ENCODE measurements at regions of chr17 and their contacts with region 1.

Region 1: DNA sequence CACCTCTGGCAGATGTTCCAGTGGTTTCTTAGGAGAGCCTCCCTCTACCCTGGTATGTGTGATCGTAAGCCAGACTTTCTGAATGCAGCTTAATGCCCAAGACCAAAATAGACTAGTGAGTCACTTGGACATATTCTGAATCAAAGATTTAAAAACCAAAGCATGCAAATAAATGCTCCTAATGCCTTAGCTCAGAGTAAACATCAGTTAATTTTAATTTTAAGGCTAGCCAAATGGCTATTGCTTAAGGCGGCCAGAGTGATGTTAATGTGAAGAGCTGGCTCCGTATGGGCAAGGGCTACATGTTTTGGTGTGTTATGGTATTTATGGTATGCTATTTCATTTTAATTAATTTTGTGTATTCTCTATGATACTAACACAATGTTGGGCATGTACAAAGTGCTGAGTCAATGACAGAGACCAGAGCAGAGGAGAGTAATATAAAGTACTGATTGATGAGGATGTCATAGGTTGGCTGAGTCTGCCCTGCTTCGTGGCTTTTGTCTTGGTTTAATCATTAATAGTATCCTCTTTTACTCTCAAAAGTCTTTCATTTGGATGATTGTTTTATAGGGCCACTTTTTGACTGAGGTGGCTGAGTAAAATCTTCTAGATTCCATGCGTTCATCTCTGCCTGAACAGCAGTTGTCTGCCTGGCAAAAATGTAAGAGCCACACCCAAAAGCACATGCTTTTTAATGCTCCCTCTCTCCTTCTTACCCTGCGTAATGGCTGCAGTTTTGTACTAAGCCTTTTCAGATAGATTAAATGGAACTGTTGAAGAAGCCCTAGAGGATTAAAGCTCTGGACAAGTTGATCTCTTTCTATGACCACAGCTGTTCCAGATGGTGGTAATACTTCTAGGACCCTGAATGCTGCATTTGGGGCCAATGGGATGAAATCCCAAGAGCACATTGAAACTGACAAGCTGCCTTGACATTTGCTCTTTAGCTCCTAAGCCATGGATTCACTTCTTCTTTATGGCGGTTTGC is 59.6 kb downstream of the MAP2K6 start:
- DNase-seq: no peak
- ATAC-seq: peak in 5 of 8 donors; percentile 41 to 79 (median 55)
- H3K4me3 ChIP-seq: no peak overlapping the region
- H3K27ac ChIP-seq: peak overlapping the region in 3 of 10 donors; percentile 1 to 25 (median 7)
- H3K4me1 ChIP-seq: peaks cover 0 to 11% (median 0%) of the 10 kb centered on the region in 9 donors
- H3K27me3 ChIP-seq: no peaks in the 10 kb centered on the region
- CTCF ChIP-seq: no peak

Region 2: DNA sequence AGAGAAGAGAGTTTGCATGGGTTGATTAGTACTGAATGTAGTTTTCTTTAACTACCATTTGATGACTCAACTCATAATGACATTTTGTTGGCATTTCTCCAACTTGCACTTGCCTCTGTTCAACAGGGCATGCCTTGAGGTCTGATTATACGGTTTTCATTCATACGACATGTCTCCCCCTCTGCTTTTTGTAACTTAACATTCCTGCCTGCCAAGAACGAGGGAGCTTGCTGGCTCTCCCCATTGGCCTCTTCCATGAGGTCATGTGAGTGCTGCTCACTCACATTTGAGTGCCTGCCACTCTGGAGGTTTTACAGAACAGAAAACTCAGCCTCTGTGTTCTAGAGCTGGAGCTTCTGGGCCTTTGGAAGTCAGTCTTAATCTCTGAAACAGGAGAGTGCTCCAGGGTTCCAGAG is 40.0 kb before region 1 on chr17:
- intact Hi-C with region 1: no loop called
- DNase-seq: peak in 1 of 2 donors; percentile 8
- ATAC-seq: peak; percentile 30 to 86 (median 71)
- H3K4me3 ChIP-seq: no peak overlapping the region
- H3K27ac ChIP-seq: no peak overlapping the region
- H3K4me1 ChIP-seq: peaks cover 0 to 18% (median 10%) of the 10 kb centered on the region in 9 donors
- H3K27me3 ChIP-seq: no peaks in the 10 kb centered on the region
- CTCF ChIP-seq: no peak

Region 3: GRCh38 chr17:69447726-69448125 is 26.4 kb before region 1 on chr17:
- intact Hi-C with region 1: loop called in 1 of 10 experiments (anchors 2 kb)
- DNase-seq: peak; percentile 24 to 35
- ATAC-seq: peak; percentile 47 to 90 (median 72)
- H3K4me3 ChIP-seq: no peak overlapping the region
- H3K27ac ChIP-seq: peak overlapping the region in 3 of 10 donors; percentile 19 to 43 (median 22)
- H3K4me1 ChIP-seq: peaks cover 0 to 25% (median 13%) of the 10 kb centered on the region in 9 donors
- H3K27me3 ChIP-seq: no peaks in the 10 kb centered on the region
- CTCF ChIP-seq: no peak

Region 4: DNA sequence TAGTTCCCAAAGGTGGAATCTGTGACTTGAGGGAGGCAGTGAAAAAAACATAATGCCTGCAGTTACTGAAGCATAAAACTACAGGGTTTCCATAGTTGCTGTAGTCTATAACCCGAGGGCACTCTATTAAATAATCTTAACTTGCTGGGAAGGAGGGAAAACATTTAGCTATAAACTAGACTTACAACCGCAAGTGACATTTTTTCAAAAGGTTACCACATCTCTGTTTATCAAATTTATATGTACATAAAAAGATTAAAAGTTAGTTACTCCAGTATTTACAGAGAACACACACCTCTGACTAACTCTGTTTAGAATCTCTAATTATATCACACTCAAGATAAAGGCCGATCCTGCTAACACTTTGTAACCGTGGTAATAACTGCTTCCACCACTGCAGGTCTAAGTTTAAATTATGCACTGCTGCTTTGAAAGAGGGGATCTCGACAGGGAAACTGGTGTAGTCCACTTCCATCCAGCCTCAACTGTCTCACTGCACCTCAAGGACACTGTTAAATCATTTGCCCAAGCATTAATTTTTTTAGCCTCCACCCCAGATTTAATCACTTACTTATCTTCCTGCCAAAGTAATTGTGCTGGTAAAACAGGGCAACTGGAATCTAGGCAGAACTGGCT is 615.5 kb after region 1 on chr17:
- intact Hi-C with region 1: no loop called
- DNase-seq: no peak
- ATAC-seq: no peak
- H3K4me3 ChIP-seq: no peak overlapping the region
- H3K27ac ChIP-seq: no peak overlapping the region
- H3K4me1 ChIP-seq: no peaks in the 10 kb centered on the region
- H3K27me3 ChIP-seq: no peaks in the 10 kb centered on the region
- CTCF ChIP-seq: no peak

Region 5: GRCh38 chr17:70447588-70447987 is 973.5 kb after region 1 on chr17:
- intact Hi-C with region 1: no loop called
- DNase-seq: no peak
- ATAC-seq: no peak
- H3K4me3 ChIP-seq: no peak overlapping the region
- H3K27ac ChIP-seq: no peak overlapping the region
- H3K4me1 ChIP-seq: peaks cover 0 to 8% (median 0%) of the 10 kb centered on the region in 9 donors
- H3K27me3 ChIP-seq: no peaks in the 10 kb centered on the region
- CTCF ChIP-seq: no peak

Measured in heart right ventricle (tissue), 16 donors.